Heart right ventricle (tissue), 16 donors: ENCODE measurements at regions of chr10 and their contacts with region 1.

Region 1: DNA sequence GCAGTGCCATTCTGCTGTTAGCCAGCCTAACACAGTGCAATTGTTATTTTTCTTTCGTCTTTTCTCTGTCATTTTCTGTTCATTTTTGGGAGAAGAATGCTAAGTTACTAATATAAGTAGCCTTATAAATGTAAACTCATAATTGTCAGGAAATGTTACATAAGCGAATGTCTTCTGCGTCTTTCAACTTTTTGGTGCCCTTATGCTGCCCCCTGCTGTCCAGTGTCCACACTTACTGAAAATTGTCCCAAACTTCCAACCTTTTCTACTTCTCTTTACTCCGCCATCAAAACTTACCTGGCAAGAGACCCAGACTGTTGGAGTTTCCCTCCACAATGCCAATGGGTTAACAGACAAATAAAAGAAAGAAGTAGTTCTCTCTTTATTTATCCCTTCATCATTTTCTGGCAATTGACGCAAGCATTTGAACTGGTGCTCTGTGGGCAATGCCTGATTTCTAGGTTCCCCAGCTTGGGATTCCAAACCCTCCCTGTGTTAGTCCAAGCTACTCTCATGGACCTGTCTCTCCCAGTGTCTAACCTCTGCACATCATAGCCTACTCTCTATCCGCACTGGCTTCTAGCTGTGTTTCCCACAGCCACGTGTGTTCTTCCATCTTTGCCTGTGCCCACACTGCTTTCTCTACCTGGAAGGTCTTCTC is 21.0 kb upstream of the EPC1 start:
- DNase-seq: peak; percentile 44 to 84
- ATAC-seq: peak in 7 of 8 donors; percentile 28 to 63 (median 50)
- H3K4me3 ChIP-seq: peak overlapping the region in 4 of 10 donors; percentile 11 to 34 (median 26)
- H3K27ac ChIP-seq: peak overlapping the region in 6 of 10 donors; percentile 0 to 38 (median 32)
- H3K4me1 ChIP-seq: peaks cover 0 to 66% (median 33%) of the 10 kb centered on the region in 9 donors
- H3K27me3 ChIP-seq: no peaks in the 10 kb centered on the region
- CTCF ChIP-seq: peak; percentile 61 to 91 (median 84)

Region 2: GRCh38 chr10:31782701-31783100 is 585.2 kb before region 1 on chr10:
- intact Hi-C with region 1: no loop called
- DNase-seq: no peak
- ATAC-seq: no peak
- H3K4me3 ChIP-seq: no peak overlapping the region
- H3K27ac ChIP-seq: no peak overlapping the region
- H3K4me1 ChIP-seq: no peaks in the 10 kb centered on the region
- H3K27me3 ChIP-seq: no peaks in the 10 kb centered on the region
- CTCF ChIP-seq: no peak

Region 3: DNA sequence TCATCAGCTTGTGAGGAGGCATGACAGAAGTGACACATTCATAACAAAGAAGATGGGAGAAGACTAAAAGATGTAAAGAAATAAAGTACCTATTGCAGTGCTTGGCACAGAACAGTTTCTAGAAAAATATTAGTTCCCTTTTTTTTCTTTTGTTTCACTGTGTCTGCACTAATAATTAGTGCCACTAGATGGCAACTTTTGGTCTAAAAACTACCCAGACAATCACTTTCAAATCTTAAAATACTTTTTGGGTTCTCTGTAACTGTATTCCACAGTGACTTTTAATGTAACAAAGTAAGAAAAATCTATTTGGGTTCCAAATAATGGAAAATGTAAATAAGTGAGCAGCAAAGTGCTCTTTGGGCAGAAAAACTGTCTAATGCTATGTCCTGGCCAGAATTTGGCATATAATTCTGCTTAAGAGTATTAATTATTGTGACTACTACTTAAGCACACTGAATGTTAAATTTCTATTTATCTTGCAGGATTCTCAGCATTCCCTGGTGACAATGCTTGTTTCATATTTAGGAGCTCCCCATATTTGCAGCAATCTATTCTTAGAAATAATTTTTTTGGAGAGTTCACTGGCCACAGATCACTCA is 176.9 kb before region 1 on chr10:
- intact Hi-C with region 1: loop called in 7 of 10 experiments (anchors 2 to 10 kb)
- DNase-seq: no peak
- ATAC-seq: peak in 2 of 8 donors; percentile 31 to 34
- H3K4me3 ChIP-seq: no peak overlapping the region
- H3K27ac ChIP-seq: no peak overlapping the region
- H3K4me1 ChIP-seq: peaks cover 0 to 11% (median 0%) of the 10 kb centered on the region in 9 donors
- H3K27me3 ChIP-seq: no peaks in the 10 kb centered on the region
- CTCF ChIP-seq: peak; percentile 56 to 84 (median 75)

Region 4: DNA sequence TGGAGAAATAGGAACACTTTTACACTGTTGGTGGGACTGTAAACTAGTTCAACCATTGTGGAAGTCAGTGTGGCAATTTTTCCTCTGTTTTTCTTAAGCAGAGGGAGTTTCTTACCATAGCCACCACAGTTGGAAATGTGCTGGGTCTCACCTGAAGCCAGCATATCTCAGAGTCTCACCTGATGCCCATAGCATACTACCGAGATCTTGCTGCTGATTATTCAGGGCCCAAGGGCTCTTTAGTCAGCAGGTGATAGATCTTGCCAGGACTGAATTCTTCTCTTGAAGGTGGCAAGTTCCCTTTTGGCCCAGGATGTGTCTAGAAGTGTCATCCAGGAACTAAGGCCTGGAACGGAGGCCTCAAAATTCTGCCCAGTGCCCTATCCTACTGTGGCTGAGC is 293.4 kb after region 1 on chr10:
- intact Hi-C with region 1: no loop called
- DNase-seq: no peak
- ATAC-seq: no peak
- H3K4me3 ChIP-seq: no peak overlapping the region
- H3K27ac ChIP-seq: no peak overlapping the region
- H3K4me1 ChIP-seq: no peaks in the 10 kb centered on the region
- H3K27me3 ChIP-seq: no peaks in the 10 kb centered on the region
- CTCF ChIP-seq: no peak